CD14-positive monocyte (primary cell): ENCODE measurements at regions of chr17 and their contacts with region 1.

Region 1: DNA sequence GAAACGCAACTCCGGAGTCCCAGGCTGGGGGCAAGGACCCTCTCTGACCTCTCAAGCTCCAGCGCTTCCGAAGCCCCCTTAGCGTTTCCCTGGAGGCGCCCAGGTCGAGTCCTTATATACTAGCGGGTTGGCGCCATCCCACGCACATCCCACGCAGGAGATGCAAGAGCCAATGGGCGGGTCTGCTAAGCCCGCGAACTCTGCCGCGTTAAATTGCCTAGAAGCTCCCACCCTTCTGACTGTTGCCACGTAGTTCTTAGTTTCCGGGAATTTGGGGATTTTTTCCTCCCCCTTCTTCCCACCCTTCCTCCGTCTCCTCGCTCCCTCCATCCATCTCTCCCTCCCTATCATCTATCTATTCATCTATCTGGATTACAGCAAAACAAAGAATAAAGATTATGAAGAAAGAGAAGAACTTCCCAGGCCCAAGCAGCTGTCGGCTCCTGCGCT is at the start of gene SLFN11:
- DNase-seq: peak; percentile 68 to 88 (median 77)
- H3K4me3 ChIP-seq: peak within 1 kb of the TSS; percentile 77 to 94 (median 92)
- H3K4me3 Mint-ChIP-seq: peak within 1 kb of the TSS; percentile 98
- H3K27ac ChIP-seq: peak within 1 kb of the TSS; percentile 95 to 99
- H3K27ac Mint-ChIP-seq: peak within 1 kb of the TSS; percentile 98 to 100 (median 99)
- H3K4me1 ChIP-seq: peaks cover 61 to 90% of the 10 kb centered on the region in 2 donors
- H3K4me1 Mint-ChIP-seq: peaks cover 66% of the 10 kb centered on the region
- H3K27me3 ChIP-seq: no peaks in the 10 kb centered on the region
- H3K27me3 Mint-ChIP-seq: peaks cover 0 to 2% (median 0%) of the 10 kb centered on the region in 3 donors
- CTCF ChIP-seq: no peak
- polyA plus RNA-seq, gene SLFN11: 34.3 to 46.8 (median 45.6) TPM

Region 2: GRCh38 chr17:35235289-35235688 is 138.3 kb before region 1 on chr17:
- intact Hi-C with region 1: no loop called
- DNase-seq: no peak
- H3K4me3 ChIP-seq: no peak overlapping the region
- H3K4me3 Mint-ChIP-seq: no peak overlapping the region
- H3K27ac ChIP-seq: no peak overlapping the region
- H3K27ac Mint-ChIP-seq: no peak overlapping the region
- H3K4me1 ChIP-seq: peaks cover 7 to 11% of the 10 kb centered on the region in 2 donors
- H3K4me1 Mint-ChIP-seq: peaks cover 14% of the 10 kb centered on the region
- H3K27me3 ChIP-seq: peaks cover 0 to 3% of the 10 kb centered on the region in 2 donors
- H3K27me3 Mint-ChIP-seq: peaks cover 12 to 14% (median 13%) of the 10 kb centered on the region in 3 donors
- CTCF ChIP-seq: no peak

Region 3: GRCh38 chr17:35345926-35346771 is 27.4 kb before region 1 on chr17:
- intact Hi-C with region 1: loop called in 1 of 2 experiments (anchors 2 kb)
- DNase-seq: peak; percentile 87 to 92 (median 91)
- H3K4me3 ChIP-seq: peak overlapping the region; percentile 44 to 74 (median 58)
- H3K4me3 Mint-ChIP-seq: peak overlapping the region; percentile 92 to 94
- H3K27ac ChIP-seq: peak overlapping the region; percentile 87 to 95
- H3K27ac Mint-ChIP-seq: peak overlapping the region; percentile 95 to 98 (median 97)
- H3K4me1 ChIP-seq: peaks cover 67 to 77% of the 10 kb centered on the region in 2 donors
- H3K4me1 Mint-ChIP-seq: peaks cover 66% of the 10 kb centered on the region
- H3K27me3 ChIP-seq: no peaks in the 10 kb centered on the region
- H3K27me3 Mint-ChIP-seq: peaks cover 0 to 2% (median 0%) of the 10 kb centered on the region in 3 donors
- CTCF ChIP-seq: no peak

Region 4: DNA sequence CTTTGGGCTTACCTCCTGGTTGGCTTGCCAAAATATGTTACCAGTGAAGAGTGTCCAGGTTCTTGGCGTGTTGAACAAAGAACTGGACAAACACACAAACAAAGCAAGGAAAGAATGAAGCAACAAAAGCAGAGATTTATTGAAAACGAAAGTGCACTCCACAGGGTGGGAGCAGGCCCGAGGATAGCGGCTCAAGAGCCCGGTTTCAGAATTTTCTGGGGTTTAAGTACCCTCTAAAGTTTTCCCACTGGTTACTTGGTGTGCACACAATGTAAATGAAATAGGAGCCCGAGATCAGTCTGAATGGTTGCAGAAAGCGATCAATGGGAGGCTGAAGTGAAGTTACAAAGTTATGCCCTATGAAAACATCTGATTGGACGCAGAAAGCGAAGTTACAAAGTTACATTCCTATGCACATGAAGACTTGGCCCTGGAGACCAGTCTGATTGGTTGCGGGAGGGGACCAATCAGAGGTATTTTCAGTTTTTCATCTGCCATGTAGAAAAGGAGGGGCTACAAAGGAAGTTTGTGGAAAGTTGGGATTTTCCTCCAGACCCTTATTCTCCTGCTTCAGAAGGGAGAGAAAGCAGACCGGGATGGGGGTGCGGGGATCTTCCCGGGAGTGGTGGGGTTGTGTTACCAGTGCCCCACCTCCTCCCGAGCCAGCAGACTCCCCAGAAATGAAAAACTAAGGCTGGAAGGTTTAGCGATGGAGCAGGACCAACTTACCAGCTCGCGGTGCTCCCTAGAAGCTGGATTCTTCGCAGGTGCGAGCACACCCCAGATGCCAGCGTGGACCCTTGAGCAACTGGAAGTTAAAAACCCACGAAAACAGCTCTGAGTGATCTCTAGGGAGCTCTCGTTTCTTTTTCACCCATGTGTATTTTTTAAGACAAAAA is 58.9 kb after region 1 on chr17 and contains the start of gene SLFN12:
- intact Hi-C with region 1: loop called (anchors 2 to 10 kb)
- DNase-seq: peak; percentile 61 to 80 (median 74)
- H3K4me3 ChIP-seq: peak within 1 kb of the TSS; percentile 93 to 97 (median 94)
- H3K4me3 Mint-ChIP-seq: peak within 1 kb of the TSS; percentile 96 to 98
- H3K27ac ChIP-seq: peak within 1 kb of the TSS; percentile 76 to 86
- H3K27ac Mint-ChIP-seq: peak within 1 kb of the TSS; percentile 49 to 93 (median 90)
- H3K4me1 ChIP-seq: peaks cover 22 to 41% of the 10 kb centered on the region in 2 donors
- H3K4me1 Mint-ChIP-seq: peaks cover 47% of the 10 kb centered on the region
- H3K27me3 ChIP-seq: no peaks in the 10 kb centered on the region
- H3K27me3 Mint-ChIP-seq: peaks cover 0 to 3% (median 0%) of the 10 kb centered on the region in 3 donors
- CTCF ChIP-seq: no peak
- polyA plus RNA-seq, gene SLFN12: 8.4 to 19.6 (median 14.5) TPM